GM12878 (cell line): ENCODE measurements at regions of chr3 and their contacts with region 1.

Region 1: DNA sequence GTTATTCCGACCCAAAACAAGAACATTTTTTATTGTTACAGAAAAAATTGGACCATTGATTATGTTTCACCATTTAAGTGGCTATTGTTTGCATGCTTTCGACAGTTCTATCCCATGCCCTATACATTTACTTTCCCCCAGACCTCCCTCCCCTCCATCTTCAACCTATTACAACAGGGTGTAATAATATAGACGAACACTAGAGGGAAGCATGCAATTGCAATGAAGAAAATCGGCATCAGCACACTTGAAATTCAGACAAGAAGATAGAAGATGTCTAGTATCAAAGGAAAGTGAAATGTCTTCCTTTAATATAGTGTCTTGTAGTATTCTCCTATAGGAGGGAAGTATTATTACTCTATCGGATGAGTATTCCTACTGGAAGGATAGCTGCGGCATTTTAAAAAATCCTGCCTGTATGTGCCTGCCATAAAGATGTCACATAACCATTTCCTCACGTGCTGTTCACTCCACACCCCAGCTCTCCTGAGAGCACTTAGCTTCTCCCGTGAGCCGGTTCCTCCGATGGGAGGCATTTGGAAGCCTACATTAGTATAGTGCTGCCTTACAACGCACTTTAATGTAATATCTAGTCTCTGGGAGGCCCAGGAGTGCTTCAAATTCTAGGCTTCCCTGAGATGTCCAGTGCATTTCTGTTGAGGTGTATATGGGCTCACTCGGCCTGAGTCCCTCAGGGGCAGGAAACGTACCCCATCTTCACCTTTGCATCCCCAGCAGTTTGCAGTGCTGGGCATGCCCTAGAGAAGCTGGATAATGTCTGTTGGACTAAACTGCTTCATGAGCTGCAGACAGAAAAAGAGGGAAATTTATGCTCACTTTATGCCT is 17.8 kb upstream of the ERICH6 start:
- DNase-seq: no peak
- ATAC-seq: peak; percentile 93
- H3K4me3 ChIP-seq: no peak overlapping the region
- H3K27ac ChIP-seq: no peak overlapping the region
- H3K4me1 ChIP-seq: no peaks in the 10 kb centered on the region
- H3K27me3 ChIP-seq: no peaks in the 10 kb centered on the region
- CTCF ChIP-seq: peak; percentile 70 to 82 (median 79); a peak in 5 of 6 replicates
- EP300 ChIP-seq: no peak
- POLR2A ChIP-seq: no peak
- RAD21 ChIP-seq: peak; percentile 100

Region 2: GRCh38 chr3:150546226-150547044 is 175.1 kb before region 1 on chr3 and contains the starts of genes EIF2A and SERP1:
- CTCF ChIA-PET with region 1: interaction called, 3 read pairs
- POLR2A ChIA-PET with region 1: no interaction called
- RAD21 ChIA-PET with region 1: no interaction called
- SMC1A ChIA-PET with region 1: no interaction called
- in situ Hi-C with region 1: no loop called
- intact Hi-C with region 1: loop called (anchors 5 kb)
- DNase-seq: peak; percentile 98
- ATAC-seq: peak; percentile 92
- H3K4me3 ChIP-seq: peak within 1 kb of the TSS; percentile 97
- H3K27ac ChIP-seq: peak within 1 kb of the TSS; percentile 96
- H3K4me1 ChIP-seq: peaks cover 3% of the 10 kb centered on the region; the same call in 1 of the 2 replicates
- H3K27me3 ChIP-seq: no peaks in the 10 kb centered on the region
- CTCF ChIP-seq: no peak
- EP300 ChIP-seq: peak in 1 of 2 experiments; percentile 44; a peak in 1 of 4 replicates
- POLR2A ChIP-seq: peak; percentile 97
- RAD21 ChIP-seq: no peak
- polyA plus RNA-seq, gene EIF2A: 126 to 130 TPM
- polyA plus RNA-seq, gene SERP1: 31.1 to 46.7 TPM

Region 3: DNA sequence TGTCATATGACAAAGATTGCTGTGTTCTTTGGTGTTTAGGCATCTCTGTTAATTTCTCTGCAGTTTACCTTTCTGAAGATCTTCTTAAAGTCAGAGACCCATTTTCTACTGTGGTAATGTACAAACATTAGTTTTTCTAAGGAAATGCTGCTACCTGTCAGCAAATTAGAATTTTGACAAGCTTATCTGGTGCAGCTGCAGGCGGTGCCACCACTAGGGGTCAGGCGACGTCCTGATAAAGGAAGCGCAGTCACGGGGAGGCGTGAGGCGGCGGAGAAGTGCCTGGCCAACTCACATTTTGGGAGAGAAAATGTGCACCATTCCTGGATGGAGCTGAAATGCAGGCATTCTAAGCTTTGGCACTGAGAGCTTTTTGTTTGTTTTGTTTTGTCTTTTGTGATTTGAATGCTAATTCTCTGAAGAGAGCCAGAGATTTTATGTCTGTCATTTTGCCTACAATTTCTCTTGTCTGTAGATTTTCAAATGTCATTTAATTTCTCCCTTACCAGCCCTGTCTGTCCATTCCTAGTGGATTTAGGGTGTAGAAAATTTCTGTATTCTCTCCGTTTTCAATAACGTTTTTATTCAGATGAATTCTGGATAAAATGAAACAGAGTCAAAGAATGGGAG is 66.3 kb after region 1 on chr3:
- CTCF ChIA-PET with region 1: interaction called, 40 read pairs
- POLR2A ChIA-PET with region 1: interaction called, 3 read pairs
- RAD21 ChIA-PET with region 1: interaction called, 21 read pairs
- SMC1A ChIA-PET with region 1: interaction called, 33 read pairs
- in situ Hi-C with region 1: no loop called
- intact Hi-C with region 1: loop called (anchors 1 kb)
- DNase-seq: no peak
- ATAC-seq: peak; percentile 94
- H3K4me3 ChIP-seq: no peak overlapping the region
- H3K27ac ChIP-seq: no peak overlapping the region
- H3K4me1 ChIP-seq: peaks cover 2% of the 10 kb centered on the region; the same call in 1 of the 2 replicates
- H3K27me3 ChIP-seq: no peaks in the 10 kb centered on the region; a peak in 1 of 4 replicates
- CTCF ChIP-seq: peak; percentile 94 to 98 (median 97); a peak in 5 of 6 replicates
- EP300 ChIP-seq: no peak
- POLR2A ChIP-seq: no peak
- RAD21 ChIP-seq: peak; percentile 81

Region 4: DNA sequence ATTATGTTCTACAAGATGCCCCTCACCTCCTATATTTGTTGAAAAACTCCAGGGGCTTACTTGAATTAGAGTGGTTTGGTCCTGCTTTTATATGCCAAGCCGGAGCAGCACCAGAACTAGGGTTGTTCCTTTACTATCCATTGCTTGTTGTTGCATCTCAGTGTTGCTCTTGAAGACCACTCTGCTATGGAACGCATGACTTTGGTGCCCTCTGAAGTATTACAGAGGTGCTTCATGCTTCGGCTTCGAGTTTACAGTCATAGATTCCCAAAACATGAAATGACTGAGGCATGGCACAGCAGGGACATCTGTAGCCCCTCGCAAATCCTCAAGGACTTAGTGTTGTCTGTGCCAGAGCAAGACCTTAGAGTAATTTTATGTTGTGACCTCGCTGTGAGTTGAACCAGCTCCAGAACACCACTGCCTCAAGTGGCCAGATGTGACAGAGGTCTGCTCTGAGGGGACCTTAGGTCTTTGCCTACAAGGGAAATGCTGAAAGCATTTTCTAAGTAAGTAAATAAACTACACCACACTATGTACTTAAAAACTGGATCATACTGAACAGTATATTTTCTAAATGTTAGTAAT is 108.7 kb after region 1 on chr3:
- CTCF ChIA-PET with region 1: interaction called, 19 read pairs
- POLR2A ChIA-PET with region 1: no interaction called
- RAD21 ChIA-PET with region 1: no interaction called
- SMC1A ChIA-PET with region 1: interaction called, 3 read pairs
- in situ Hi-C with region 1: no loop called
- intact Hi-C with region 1: loop called (anchors 1 kb)
- DNase-seq: no peak
- ATAC-seq: peak; percentile 89
- H3K4me3 ChIP-seq: no peak overlapping the region
- H3K27ac ChIP-seq: no peak overlapping the region
- H3K4me1 ChIP-seq: no peaks in the 10 kb centered on the region
- H3K27me3 ChIP-seq: no peaks in the 10 kb centered on the region
- CTCF ChIP-seq: peak; percentile 38 to 63 (median 50); a peak in 5 of 6 replicates
- EP300 ChIP-seq: no peak
- POLR2A ChIP-seq: no peak
- RAD21 ChIP-seq: peak; percentile 44

Region 5: DNA sequence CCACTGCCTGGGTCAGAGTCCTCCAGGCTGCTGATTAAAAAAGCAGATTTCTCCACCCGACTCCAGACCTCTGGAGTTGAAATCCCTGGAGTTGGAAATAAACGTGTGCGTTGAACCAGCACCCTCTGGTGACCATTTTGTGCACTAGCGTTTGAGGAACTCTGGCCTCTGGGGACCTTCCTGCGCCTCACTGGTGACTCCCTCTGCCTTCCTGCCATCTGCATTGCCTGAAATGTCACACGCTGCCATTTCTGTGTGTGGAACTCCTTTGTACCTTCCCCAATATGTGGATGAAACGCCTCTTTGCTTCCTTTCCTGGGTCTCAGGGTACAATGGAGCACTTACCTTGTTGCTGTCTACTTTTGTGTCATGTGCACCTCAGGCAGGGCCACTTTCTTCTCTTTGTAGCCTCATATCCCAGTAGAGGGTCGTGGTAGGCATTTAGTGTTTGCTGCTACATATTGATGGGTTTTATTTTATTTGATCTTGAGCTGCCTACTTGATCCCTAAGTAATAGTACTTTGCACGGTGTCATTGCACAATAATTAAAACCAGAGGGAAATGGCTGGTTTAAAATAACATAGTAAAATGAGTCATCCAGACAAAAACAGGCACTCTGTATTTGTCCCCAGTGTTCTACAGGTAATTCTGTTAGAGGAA is 424.7 kb after region 1 on chr3:
- CTCF ChIA-PET with region 1: interaction called, 5 read pairs
- POLR2A ChIA-PET with region 1: no interaction called
- RAD21 ChIA-PET with region 1: no interaction called
- SMC1A ChIA-PET with region 1: interaction called, 3 read pairs
- in situ Hi-C with region 1: loop called (anchors 10 kb)
- intact Hi-C with region 1: loop called (anchors 1 kb)
- DNase-seq: peak; percentile 25
- ATAC-seq: peak; percentile 94
- H3K4me3 ChIP-seq: no peak overlapping the region
- H3K27ac ChIP-seq: no peak overlapping the region
- H3K4me1 ChIP-seq: no peaks in the 10 kb centered on the region
- H3K27me3 ChIP-seq: peaks cover 2 to 3% of the 10 kb centered on the region in 2 experiments
- CTCF ChIP-seq: peak; percentile 83 to 90 (median 83)
- EP300 ChIP-seq: no peak
- POLR2A ChIP-seq: no peak
- RAD21 ChIP-seq: peak; percentile 74